Activated B cell treated with CpG ODN at 0.5 μM for 24 hours (primary cell): ENCODE measurements at regions of chr12 and their contacts with region 1.

Region 1: DNA sequence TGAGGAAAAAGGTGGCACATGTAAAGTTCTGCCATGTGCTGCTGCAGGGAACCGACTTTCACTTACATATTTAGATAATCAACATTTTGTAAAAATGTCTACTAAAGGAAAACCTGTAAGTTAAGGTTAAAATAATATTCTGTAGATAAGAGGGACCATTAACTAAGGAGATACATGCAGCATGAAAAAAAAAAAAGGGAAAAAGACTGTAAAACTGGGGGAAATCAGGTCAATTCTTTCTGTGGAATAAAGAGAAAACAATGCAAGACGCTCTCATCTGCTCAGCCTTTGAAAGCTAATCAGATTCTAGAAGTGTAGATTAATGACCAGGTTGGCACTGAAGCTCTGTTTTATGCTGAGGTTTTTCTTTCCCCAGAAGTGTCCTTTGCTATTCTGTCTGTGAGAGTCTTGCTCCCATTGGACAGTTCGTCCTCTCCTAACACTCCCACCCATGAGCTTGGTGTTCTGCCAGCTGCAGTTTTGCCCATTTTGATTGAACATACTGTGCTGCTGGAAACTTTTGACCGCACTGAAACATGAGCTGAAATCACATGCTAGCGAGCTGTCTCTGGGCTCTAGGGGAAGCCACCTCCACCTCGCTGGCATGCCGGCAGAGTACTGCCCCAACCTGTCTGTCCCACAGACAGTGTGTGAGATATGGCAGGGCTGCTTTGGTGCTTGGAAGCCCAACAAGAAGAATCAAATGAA is 39.7 kb downstream of the PPTC7 start:
- DNase-seq: no peak
- ATAC-seq: peak; percentile 42
- H3K4me3 Mint-ChIP-seq: peak overlapping the region; percentile 9
- H3K27ac Mint-ChIP-seq: peak overlapping the region; percentile 72
- H3K4me1 Mint-ChIP-seq: peaks cover 39% of the 10 kb centered on the region
- H3K27me3 Mint-ChIP-seq: no peaks in the 10 kb centered on the region
- CTCF ChIP-seq: no peak

Region 2: DNA sequence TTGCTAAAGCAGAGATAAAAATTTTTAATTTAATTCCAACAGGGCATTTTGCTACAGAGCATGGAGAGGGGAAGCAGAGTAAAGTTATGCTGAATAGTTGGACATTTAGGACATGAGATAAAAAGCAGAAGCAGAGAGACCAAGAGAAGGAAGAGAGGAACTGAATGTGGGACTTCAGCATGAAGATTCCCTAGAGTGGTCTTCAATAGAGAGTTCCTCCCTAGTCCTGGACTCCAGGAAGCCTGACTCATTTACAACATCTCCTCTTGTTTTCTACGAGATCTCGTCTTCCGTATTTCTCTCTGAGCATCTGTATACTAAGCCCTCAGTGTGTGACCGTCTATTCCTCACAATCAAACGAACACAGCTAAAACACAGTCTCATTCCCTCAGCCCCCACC is 454.5 kb before region 1 on chr12:
- CTCF ChIA-PET with region 1: no interaction called
- POLR2A ChIA-PET with region 1: no interaction called
- intact Hi-C with region 1: no loop called
- DNase-seq: no peak
- ATAC-seq: no peak
- H3K4me3 Mint-ChIP-seq: no peak overlapping the region
- H3K27ac Mint-ChIP-seq: no peak overlapping the region
- H3K4me1 Mint-ChIP-seq: no peaks in the 10 kb centered on the region
- H3K27me3 Mint-ChIP-seq: peaks cover 16% of the 10 kb centered on the region
- CTCF ChIP-seq: no peak

Region 3: GRCh38 chr12:110513842-110514241 is 29.6 kb before region 1 on chr12:
- CTCF ChIA-PET with region 1: no interaction called
- POLR2A ChIA-PET with region 1: no interaction called
- intact Hi-C with region 1: loop called (anchors 5 kb)
- DNase-seq: no peak
- ATAC-seq: no peak
- H3K4me3 Mint-ChIP-seq: no peak overlapping the region
- H3K27ac Mint-ChIP-seq: no peak overlapping the region
- H3K4me1 Mint-ChIP-seq: no peaks in the 10 kb centered on the region
- H3K27me3 Mint-ChIP-seq: no peaks in the 10 kb centered on the region
- CTCF ChIP-seq: no peak

Region 4: GRCh38 chr12:110577717-110578521 is 34.5 kb after region 1 on chr12:
- CTCF ChIA-PET with region 1: no interaction called
- POLR2A ChIA-PET with region 1: interaction called, 7 read pairs
- intact Hi-C with region 1: loop called (anchors 5 kb)
- DNase-seq: no peak
- ATAC-seq: peak; percentile 12
- H3K4me3 Mint-ChIP-seq: peak overlapping the region; percentile 47
- H3K27ac Mint-ChIP-seq: peak overlapping the region; percentile 84
- H3K4me1 Mint-ChIP-seq: peaks cover 70% of the 10 kb centered on the region
- H3K27me3 Mint-ChIP-seq: no peaks in the 10 kb centered on the region
- CTCF ChIP-seq: no peak